CD14-positive monocyte (primary cell): ENCODE measurements at regions of chr4 and their contacts with region 1.

Region 1: GRCh38 chr4:74038161-74039064 is at the start of gene CXCL3:
- DNase-seq: peak; percentile 21 to 88 (median 27)
- H3K4me3 ChIP-seq: peak within 1 kb of the TSS; percentile 62 to 91 (median 85)
- H3K4me3 Mint-ChIP-seq: peak within 1 kb of the TSS; percentile 80 to 89
- H3K27ac ChIP-seq: peak within 1 kb of the TSS in 1 of 2 donors; percentile 49
- H3K27ac Mint-ChIP-seq: peak within 1 kb of the TSS in 6 of 7 donors; percentile 34 to 92 (median 85)
- H3K4me1 ChIP-seq: peaks cover 20 to 28% of the 10 kb centered on the region in 2 donors
- H3K4me1 Mint-ChIP-seq: peaks cover 27% of the 10 kb centered on the region
- H3K27me3 ChIP-seq: peaks cover 19 to 28% of the 10 kb centered on the region in 2 donors
- H3K27me3 Mint-ChIP-seq: peaks cover 11 to 31% (median 27%) of the 10 kb centered on the region in 3 donors
- CTCF ChIP-seq: peak; percentile 66
- polyA plus RNA-seq, gene CXCL3: 2.5 to 4.4 (median 3.7) TPM

Region 2: GRCh38 chr4:73662709-73663546 is 375.5 kb before region 1 on chr4:
- intact Hi-C with region 1: loop called in 1 of 2 experiments (anchors 10 kb)
- DNase-seq: peak; percentile 48 to 76 (median 65)
- H3K4me3 ChIP-seq: no peak overlapping the region
- H3K4me3 Mint-ChIP-seq: no peak overlapping the region
- H3K27ac ChIP-seq: no peak overlapping the region
- H3K27ac Mint-ChIP-seq: peak overlapping the region in 1 of 7 donors; percentile 31
- H3K4me1 ChIP-seq: no peaks in the 10 kb centered on the region
- H3K4me1 Mint-ChIP-seq: peaks cover 5% of the 10 kb centered on the region
- H3K27me3 ChIP-seq: no peaks in the 10 kb centered on the region
- H3K27me3 Mint-ChIP-seq: no peaks in the 10 kb centered on the region
- CTCF ChIP-seq: peak; percentile 75